Right cardiac atrium (tissue), 5 donors: ENCODE measurements at regions of chr2 and their contacts with region 1.

Region 1: DNA sequence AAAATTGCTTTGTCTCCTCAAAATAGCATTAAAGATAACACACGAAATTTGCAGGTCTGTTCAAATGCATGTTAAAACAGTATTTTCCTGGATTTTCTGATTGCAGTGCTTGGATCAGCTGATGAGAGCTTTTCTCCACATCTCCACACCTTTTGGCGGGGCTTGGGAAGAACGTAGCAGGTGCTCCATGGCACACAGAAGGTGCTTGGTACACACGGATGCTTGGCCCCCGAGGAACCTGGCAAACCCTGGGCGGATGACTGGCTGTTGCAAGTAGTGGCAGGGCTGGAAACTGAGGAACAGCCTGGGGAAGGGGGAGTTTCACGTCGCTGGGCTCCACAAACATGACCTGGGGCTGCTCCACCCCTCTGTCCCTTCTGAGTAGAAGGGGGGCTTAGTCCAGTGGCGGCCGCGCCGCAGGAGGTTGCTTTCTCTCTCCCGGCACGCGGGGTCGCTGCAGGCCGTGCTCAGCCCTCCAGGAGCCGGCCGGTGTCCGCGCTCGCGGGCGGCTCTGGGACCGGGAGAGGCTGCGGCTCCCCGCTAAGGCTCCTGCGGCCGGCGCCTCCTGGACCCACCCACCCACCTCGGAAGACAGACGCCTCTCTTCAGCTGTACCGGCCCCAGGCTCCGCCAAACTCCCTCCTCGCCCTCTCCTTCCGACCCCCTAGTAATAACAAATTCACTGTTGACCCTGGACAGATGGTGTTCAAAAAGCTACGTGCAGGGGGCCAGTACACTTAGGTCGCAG is 69.3 kb downstream of the MARCO start:
- DNase-seq: peak; percentile 43 to 82 (median 78)
- ATAC-seq: peak; percentile 85 to 87
- H3K4me3 ChIP-seq: no peak overlapping the region
- H3K27ac ChIP-seq: no peak overlapping the region
- H3K4me1 ChIP-seq: no peaks in the 10 kb centered on the region
- H3K27me3 ChIP-seq: no peaks in the 10 kb centered on the region

Region 2: GRCh38 chr2:119264781-119265692 is 253.7 kb after region 1 on chr2:
- intact Hi-C with region 1: loop called in 2 of 4 experiments (anchors 5 to 10 kb)
- DNase-seq: peak in 1 of 3 donors; percentile 28
- ATAC-seq: peak; percentile 79 to 82
- H3K4me3 ChIP-seq: no peak overlapping the region
- H3K27ac ChIP-seq: no peak overlapping the region
- H3K4me1 ChIP-seq: no peaks in the 10 kb centered on the region
- H3K27me3 ChIP-seq: no peaks in the 10 kb centered on the region

Region 3: GRCh38 chr2:119290859-119291587 is 279.7 kb after region 1 on chr2:
- intact Hi-C with region 1: loop called in 2 of 4 experiments (anchors 2 to 5 kb)
- DNase-seq: peak; percentile 89 to 91 (median 89)
- ATAC-seq: peak; percentile 73 to 90
- H3K4me3 ChIP-seq: no peak overlapping the region
- H3K27ac ChIP-seq: no peak overlapping the region
- H3K4me1 ChIP-seq: no peaks in the 10 kb centered on the region
- H3K27me3 ChIP-seq: no peaks in the 10 kb centered on the region